ENCODE measurements at regions of chr2 and their contacts with region 1.

Region 1: DNA sequence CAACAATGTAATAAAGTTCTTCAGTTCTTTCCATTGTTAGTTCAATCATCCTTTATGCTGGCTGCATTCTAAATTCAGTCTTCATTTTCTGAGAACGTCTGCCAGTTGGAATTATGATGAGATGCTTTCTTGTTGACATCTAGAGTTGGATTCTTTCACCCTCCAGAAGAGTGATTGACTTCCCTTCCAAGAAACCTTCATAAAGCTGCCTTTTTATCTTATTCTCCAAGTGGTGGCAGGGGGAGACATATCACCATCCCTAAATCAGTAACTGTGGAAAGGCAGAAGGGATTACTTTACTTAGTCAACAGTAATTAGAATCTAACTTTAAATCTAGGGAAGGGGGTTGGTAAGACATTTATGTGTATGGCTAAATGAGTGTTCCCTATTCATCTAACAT is 86.8 kb upstream of the GULP1 start:
- DNase-seq: no peak
- H3K4me3 ChIP-seq: no peak overlapping the region
- H3K27ac ChIP-seq: no peak overlapping the region
- H3K27me3 ChIP-seq: no peaks in the 10 kb centered on the region
- CTCF ChIP-seq: no peak

Region 2: GRCh38 chr2:188219541-188219940 is 14.7 kb after region 1 on chr2:
- CTCF ChIA-PET with region 1: interaction called, 10 read pairs
- POLR2A ChIA-PET with region 1: no interaction called
- DNase-seq: no peak
- H3K4me3 ChIP-seq: no peak overlapping the region
- H3K27ac ChIP-seq: no peak overlapping the region
- H3K27me3 ChIP-seq: no peaks in the 10 kb centered on the region
- CTCF ChIP-seq: no peak

Measured in AG04450 (cell line).